ENCODE measurements at regions of chr7 and their contacts with region 1.

Region 1: GRCh38 chr7:30800785-30801252 is 29.6 kb downstream of the MINDY4 start:
- DNase-seq: no peak
- H3K4me3 Mint-ChIP-seq: no peak overlapping the region
- H3K27ac Mint-ChIP-seq: no peak overlapping the region
- H3K4me1 Mint-ChIP-seq: peaks cover 15% of the 10 kb centered on the region
- H3K27me3 Mint-ChIP-seq: no peaks in the 10 kb centered on the region

Region 2: DNA sequence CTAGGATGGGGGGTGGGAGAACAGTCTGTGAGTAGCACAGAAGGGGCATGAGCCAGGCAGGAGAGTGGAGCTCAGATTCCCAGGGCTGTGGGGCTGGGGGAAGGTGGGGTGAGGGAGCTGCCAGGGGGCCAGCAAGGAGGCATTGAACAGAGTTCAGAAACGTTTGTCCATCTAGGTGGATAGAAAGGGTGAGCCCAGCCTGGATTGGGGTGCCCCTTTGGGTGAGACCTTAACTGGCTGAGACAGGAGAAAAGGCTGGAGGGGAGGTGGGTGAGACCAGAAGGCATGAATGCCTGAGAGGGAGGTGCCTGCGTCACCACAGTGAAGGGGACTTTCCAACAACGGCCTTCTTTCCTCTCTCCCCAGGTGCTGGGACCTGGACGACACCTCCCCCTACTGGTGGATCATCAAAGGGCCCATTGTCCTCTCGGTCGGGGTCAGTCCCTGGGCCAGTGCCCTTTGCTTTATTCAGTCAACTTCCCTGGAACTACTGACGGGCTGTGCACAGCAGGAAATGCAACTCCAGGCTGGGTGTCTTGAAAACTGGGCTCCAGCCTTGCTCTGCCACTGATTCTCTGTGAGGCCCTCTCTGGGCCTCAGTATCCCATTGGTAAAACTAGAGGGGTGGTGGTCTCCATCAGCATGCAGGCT is 173.9 kb after region 1 on chr7:
- intact Hi-C with region 1: loop called (anchors 2 kb)
- DNase-seq: peak; percentile 40
- H3K4me3 Mint-ChIP-seq: no peak overlapping the region
- H3K27ac Mint-ChIP-seq: peak overlapping the region; percentile 56
- H3K4me1 Mint-ChIP-seq: peaks cover 7% of the 10 kb centered on the region
- H3K27me3 Mint-ChIP-seq: peaks cover 9% of the 10 kb centered on the region

Region 3: DNA sequence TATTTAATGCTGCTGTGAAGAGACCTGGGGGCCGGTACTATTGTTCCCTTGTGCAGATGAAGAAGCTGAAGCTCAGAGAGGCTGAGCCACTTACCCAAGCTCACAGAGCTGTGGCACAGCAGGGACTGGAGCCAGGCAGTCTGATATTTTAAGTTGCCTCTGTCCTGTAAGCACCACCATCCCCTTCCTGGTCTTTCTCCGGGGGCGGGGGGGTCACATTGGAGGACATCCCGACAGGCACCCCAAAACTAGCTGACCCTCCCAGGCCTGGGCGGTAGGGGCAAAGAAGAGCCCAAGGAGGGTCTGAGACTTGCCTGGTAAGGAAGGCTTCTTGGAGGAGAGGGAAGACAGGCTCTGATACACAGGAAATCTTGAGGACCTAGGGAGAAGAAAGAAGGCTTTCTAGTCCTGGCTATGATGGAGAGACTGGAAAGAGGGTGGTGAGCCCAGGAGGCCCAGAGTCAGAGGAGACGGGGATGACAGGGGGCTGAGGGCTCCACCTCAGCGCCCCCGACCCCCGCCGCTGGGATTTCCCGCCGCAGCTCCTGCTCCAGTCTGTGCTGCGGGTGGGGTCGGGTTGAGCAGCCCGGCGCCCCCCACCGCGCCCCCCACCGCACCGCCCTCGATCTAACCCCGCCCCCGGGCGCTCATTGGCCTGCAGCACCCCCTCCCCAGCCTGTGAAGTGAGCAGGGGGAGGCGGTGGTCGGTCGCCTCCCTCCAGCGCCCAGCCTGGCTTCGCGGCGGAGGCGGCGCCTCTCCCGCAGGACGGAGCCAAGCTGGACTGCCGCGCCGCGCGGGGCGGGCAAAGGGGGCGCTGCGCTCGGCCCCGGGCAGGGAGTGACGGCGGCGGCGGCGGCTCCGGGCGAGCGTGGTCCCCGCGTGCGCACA is 251.0 kb after region 1 on chr7 and contains the start of gene ADCYAP1R1:
- intact Hi-C with region 1: no loop called
- DNase-seq: no peak
- H3K4me3 Mint-ChIP-seq: no peak within 1 kb of the TSS
- H3K27ac Mint-ChIP-seq: no peak within 1 kb of the TSS
- H3K4me1 Mint-ChIP-seq: no peaks in the 10 kb centered on the region
- H3K27me3 Mint-ChIP-seq: peaks cover 30% of the 10 kb centered on the region
- total RNA-seq, gene ADCYAP1R1: not detected in 2 replicates

Region 4: DNA sequence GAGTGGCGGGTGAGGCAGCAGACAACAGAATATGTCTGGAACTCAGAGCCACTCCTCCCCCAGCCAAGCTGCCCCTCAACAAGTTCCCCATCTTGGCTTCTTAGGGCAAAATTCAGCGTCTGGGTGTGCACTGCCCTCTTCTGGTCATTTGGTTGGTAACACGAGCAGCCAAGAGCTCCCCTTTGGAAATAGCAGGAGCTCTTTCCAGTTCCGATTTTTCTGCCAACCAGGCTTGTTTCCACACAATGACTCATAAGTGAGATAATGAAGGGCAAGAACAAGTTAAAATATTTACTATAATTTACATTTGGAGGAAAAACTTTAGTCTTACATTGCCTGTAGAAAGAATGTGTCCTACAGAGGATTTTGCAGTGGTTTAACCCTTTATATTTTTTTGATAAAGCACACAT is 321.8 kb after region 1 on chr7:
- intact Hi-C with region 1: loop called (anchors 2 kb)
- DNase-seq: no peak
- H3K4me3 Mint-ChIP-seq: no peak overlapping the region
- H3K27ac Mint-ChIP-seq: no peak overlapping the region
- H3K4me1 Mint-ChIP-seq: no peaks in the 10 kb centered on the region
- H3K27me3 Mint-ChIP-seq: peaks cover 2% of the 10 kb centered on the region